ENCODE measurements at regions of chr6 and their contacts with region 1.

Region 1: GRCh38 chr6:7725849-7726415 is at the start of gene BMP6:
- DNase-seq: peak; percentile 86
- H3K4me3 ChIP-seq: peak within 1 kb of the TSS; percentile 42 to 64 (median 62)
- H3K27ac ChIP-seq: no peak within 1 kb of the TSS
- H3K4me1 ChIP-seq: peaks cover 19% of the 10 kb centered on the region
- H3K27me3 ChIP-seq: peaks cover 24% of the 10 kb centered on the region
- CTCF ChIP-seq: no peak
- total RNA-seq, gene BMP6: 0.33 to 1.2 TPM

Region 2: DNA sequence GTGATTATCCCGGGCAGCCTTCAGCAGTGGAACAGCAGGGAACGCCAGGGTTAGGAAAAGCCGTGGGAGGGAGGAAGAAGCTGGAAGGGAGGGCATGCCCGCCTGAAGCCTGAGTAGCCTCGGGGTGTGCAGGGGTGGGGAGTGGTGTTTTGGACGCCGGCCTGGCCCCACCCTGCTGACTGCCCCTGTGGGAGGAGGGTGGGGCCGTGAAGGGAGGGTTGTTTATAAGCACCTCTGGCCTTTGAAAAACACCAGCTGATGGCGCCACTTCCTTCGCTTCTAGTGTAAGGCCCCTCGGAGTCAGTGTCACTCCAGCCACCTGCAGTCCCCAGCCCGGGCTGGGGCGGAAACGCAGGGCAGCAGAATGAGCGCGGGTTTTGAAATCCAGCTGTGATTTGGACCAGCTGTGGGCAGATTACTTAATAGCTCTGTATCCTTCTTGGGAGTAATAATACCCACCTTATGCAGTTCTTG is 52.8 kb before region 1 on chr6:
- CTCF ChIA-PET with region 1: interaction called, 3 read pairs
- dilution Hi-C with region 1: no loop called
- in situ Hi-C with region 1: no loop called
- intact Hi-C with region 1: loop called (anchors 5 kb)
- DNase-seq: peak; percentile 81
- H3K4me3 ChIP-seq: no peak overlapping the region
- H3K27ac ChIP-seq: peak overlapping the region; percentile 41
- H3K4me1 ChIP-seq: peaks cover 35% of the 10 kb centered on the region
- H3K27me3 ChIP-seq: no peaks in the 10 kb centered on the region
- CTCF ChIP-seq: peak in 1 of 2 donors; percentile 44

Region 3: GRCh38 chr6:7878401-7878964 is 152.6 kb after region 1 on chr6:
- CTCF ChIA-PET with region 1: no interaction called
- dilution Hi-C with region 1: no loop called
- in situ Hi-C with region 1: no loop called
- intact Hi-C with region 1: loop called (anchors 5 kb)
- DNase-seq: no peak
- H3K4me3 ChIP-seq: no peak overlapping the region
- H3K27ac ChIP-seq: no peak overlapping the region
- H3K4me1 ChIP-seq: no peaks in the 10 kb centered on the region
- H3K27me3 ChIP-seq: no peaks in the 10 kb centered on the region
- CTCF ChIP-seq: no peak

Region 4: DNA sequence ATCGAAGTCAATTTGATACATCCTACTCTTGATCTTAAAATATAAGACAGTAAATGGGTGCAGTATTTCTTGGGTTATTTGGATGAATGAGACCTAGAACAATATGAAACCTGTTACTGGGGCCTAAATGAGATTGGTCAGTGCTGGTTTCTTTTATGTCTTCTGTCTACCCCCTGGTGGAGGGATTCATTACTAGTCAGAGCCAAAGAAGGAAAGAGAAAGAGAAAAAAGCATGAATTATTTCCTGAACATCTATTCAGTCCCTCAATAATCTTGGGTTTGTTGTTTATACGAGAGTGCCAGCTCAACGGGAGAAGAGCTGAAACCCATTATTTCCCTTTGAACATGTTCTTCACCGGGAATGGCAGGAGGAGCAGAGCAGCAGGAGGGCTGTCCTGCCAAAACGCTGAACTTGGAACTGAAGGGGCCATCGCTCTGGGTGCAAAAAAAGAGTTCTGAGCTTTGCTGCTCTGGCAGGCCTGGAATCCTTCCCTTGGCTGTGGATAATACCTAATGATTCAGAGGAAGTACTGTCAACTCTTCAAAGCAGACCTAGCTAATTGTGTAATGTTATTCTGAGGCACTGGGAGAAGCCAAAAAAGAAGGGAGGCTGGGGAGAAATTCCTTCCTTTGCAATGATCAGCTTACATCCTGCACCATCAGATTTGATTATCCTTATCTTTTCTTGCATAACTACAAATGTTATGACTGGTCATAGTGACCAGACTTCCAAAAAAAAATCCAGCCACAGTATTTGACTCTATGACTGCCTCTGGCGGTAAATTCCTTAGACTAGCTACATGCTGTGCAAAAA is 266.3 kb after region 1 on chr6:
- CTCF ChIA-PET with region 1: interaction called, 3 read pairs
- dilution Hi-C with region 1: no loop called
- in situ Hi-C with region 1: loop called (anchors 10 kb)
- intact Hi-C with region 1: loop called (anchors 1 kb)
- DNase-seq: peak; percentile 28
- H3K4me3 ChIP-seq: no peak overlapping the region
- H3K27ac ChIP-seq: no peak overlapping the region
- H3K4me1 ChIP-seq: no peaks in the 10 kb centered on the region
- H3K27me3 ChIP-seq: no peaks in the 10 kb centered on the region
- CTCF ChIP-seq: peak; percentile 30 to 40

Region 5: DNA sequence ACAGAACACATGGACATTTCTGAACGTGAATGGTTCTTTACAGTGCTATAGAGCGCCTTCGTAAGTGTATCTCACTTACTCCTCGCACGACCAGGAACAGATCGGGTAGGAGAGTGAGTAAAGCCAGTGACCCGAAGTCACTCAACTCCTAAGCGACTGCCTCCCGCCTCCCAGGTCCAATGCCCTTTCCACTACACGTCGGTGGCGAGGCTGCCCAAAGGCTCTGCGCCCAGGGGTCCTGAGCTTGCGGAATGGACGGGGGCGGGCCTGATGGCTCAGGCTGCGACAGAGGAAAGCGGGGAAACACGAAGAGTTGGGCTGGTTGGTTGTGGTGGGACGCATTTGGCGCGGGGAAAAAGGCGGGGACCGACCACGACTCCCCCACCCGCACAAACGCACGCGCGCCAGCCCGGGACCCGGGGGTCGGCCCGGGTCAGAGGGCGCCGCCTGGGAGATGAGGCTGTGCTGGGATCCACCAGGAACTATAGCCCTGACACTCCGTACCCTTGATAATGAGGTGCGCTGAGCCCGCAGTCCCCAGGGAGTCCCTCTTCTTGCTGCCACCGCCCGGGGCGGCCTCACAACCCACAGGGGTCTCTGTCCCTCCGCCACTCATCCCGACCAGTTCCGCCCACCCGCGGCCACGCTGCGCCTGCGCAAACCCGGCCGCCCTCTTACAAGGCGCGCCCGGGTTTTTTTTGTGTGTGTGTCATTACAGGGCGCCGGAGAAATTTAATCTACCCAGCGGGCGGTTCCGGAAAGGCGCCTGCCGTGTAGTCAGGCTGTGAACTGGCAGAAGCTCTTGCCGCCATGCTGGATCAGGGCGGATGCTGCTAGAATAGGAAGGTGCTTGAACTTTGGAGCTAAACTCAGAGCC is 338.1 kb after region 1 on chr6 and contains the start of gene BLOC1S5:
- CTCF ChIA-PET with region 1: no interaction called
- dilution Hi-C with region 1: no loop called
- in situ Hi-C with region 1: no loop called
- intact Hi-C with region 1: loop called (anchors 1 kb)
- DNase-seq: peak; percentile 92
- H3K4me3 ChIP-seq: peak within 1 kb of the TSS; percentile 81 to 97 (median 87)
- H3K27ac ChIP-seq: peak within 1 kb of the TSS; percentile 88
- H3K4me1 ChIP-seq: peaks cover 4% of the 10 kb centered on the region
- H3K27me3 ChIP-seq: no peaks in the 10 kb centered on the region
- CTCF ChIP-seq: peak in 1 of 2 donors; percentile 0
- total RNA-seq, gene BLOC1S5: 9.0 to 11.9 TPM